Posterior vena cava (tissue), 2 donors: ENCODE measurements at regions of chr6 and their contacts with region 1.

Region 1: GRCh38 chr6:70507161-70507560 is 59.6 kb upstream of the SDHAF4 start:
- DNase-seq: no peak

Region 2: DNA sequence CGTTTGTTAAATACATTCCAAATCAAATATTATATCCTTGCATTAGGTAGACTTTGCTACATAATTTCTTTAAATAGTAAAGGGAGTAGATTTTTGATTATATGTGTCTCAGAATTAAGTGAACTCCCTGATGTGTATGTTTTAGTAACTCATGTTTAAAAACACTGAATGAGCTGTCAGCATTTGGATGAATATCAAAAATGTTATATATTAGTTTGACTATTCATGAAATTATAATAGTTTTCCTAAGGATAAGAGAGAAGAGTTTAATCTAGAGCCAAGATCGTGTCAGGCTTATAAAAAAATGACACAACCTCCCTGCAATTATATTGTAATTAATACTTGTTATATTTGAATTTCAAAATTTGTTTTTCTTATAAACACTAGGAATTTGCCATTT is 445.6 kb before region 1 on chr6:
- intact Hi-C with region 1: no loop called
- DNase-seq: no peak

Region 3: GRCh38 chr6:70310063-70310694 is 197.0 kb before region 1 on chr6:
- intact Hi-C with region 1: no loop called
- DNase-seq: no peak

Region 4: GRCh38 chr6:70531133-70531532 is 24.0 kb after region 1 on chr6:
- intact Hi-C with region 1: no loop called
- DNase-seq: no peak

Region 5: GRCh38 chr6:70575891-70576495 is 68.8 kb after region 1 on chr6:
- intact Hi-C with region 1: loop called in 1 of 2 experiments (anchors 2 kb)
- DNase-seq: no peak

Region 6: DNA sequence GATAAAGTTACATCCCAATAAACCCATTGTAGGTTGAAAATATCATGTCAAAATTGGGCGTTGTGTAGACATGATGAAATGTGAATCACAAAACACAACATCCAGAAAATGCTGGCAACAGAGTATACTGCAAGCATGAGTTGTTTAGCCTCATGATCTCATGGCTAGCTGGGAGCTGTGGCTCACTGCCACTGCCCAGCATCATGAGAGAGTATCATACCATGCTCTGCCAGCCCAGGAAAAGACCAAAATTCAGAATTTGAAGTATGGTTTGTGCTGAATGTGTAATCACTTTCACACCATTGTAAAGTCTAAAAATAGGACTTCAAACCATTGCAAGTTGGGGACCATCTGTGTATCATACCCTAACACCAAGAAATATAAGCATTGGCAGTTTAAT is 115.3 kb after region 1 on chr6:
- intact Hi-C with region 1: no loop called
- DNase-seq: no peak

Region 7: DNA sequence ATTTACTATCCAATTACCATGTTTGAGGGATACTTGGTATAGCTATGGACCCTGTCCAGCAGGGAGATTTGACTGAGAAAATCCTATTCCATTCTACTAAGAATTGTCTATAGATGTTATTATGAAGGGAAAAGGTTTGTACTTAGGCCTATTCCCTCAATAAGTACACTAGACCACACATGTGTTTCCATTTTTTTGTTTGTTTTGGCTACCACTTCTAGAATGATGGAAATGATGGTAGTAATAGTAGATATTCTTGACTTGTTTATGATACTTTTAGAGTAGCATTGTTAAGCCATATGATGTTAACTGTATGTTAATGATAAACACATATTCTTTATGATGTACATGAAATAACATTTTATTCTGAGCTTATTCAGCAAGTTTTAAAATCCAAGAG is 926.3 kb after region 1 on chr6:
- intact Hi-C with region 1: loop called in 1 of 2 experiments (anchors 10 kb)
- DNase-seq: no peak